Activated CD8-positive, alpha-beta memory T cell treated with anti-CD3 and anti-CD28 coated beads, Interleukin-2, amount 10 ng/mL, durations not matched to agents 7 days and 5 days (primary cell): ENCODE measurements at regions of chr10 and their contacts with region 1.

Region 1: DNA sequence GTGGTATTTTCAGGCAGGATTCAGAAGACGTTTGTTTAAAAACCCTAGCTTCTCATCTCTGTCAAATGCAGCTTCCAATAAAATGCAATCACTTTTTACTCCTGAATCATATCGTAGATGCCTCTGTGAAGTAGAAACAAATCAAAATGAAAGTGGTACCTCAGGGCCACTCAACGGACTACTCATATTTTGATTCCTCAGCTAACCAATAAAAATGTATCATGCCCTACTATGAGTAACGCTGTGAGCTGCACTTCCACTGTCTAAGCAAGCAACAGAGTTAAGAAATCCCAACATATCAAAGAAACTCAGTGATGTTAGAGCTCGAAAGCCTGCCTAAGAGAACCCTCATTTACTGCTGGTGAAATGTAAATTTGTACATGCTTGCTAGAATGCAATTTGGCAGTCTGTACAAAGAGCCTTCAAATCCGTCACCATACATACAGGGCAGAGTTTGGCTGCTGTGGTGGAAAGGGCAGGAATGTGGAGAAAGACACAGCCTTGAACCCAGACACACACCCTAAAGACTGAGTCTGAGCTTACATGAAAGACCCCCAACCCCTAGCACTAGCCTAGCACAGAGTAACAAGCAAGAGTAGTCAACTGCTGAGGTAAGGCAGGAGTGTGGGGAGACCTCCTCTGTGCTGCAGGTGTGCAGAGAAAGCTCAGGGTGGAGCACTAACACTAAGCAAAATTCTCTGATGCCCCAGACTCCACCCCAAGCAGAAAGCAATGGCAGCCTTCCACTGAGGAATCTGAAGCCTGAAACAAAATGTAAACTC is 151.5 kb downstream of the ANK3 start:
- DNase-seq: peak; percentile 54
- ATAC-seq: peak; percentile 87
- H3K4me3 Mint-ChIP-seq: peak overlapping the region; percentile 65
- H3K27ac Mint-ChIP-seq: peak overlapping the region; percentile 73
- H3K4me1 Mint-ChIP-seq: peaks cover 27% of the 10 kb centered on the region
- H3K27me3 Mint-ChIP-seq: peaks cover 2% of the 10 kb centered on the region

Region 2: GRCh38 chr10:60434418-60435046 is 196.4 kb after region 1 on chr10:
- CTCF ChIA-PET with region 1: interaction called, 10 read pairs
- DNase-seq: no peak
- ATAC-seq: no peak
- H3K4me3 Mint-ChIP-seq: no peak overlapping the region
- H3K27ac Mint-ChIP-seq: no peak overlapping the region
- H3K4me1 Mint-ChIP-seq: no peaks in the 10 kb centered on the region
- H3K27me3 Mint-ChIP-seq: no peaks in the 10 kb centered on the region

Region 3: DNA sequence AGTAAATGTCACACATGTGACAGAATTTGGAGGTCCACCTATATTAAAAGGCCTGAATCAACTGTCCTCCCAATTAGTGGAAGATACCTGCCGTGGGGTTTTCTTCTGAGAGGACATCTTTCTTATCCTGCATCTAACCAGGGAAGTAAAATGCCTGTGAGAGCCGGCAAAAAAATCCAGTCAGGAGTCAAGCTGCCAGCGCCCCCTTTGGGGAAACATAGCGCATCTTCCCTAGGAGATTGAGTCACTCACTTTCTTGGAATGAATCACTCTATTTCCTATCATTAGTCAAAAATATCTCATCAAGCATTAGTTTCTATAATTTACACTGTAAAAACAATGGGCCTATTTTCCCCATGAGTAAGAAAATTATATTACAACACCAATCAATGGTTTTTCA is 217.9 kb after region 1 on chr10:
- CTCF ChIA-PET with region 1: no interaction called
- DNase-seq: no peak
- ATAC-seq: no peak
- H3K4me3 Mint-ChIP-seq: no peak overlapping the region
- H3K27ac Mint-ChIP-seq: no peak overlapping the region
- H3K4me1 Mint-ChIP-seq: no peaks in the 10 kb centered on the region
- H3K27me3 Mint-ChIP-seq: peaks cover 5% of the 10 kb centered on the region